ENCODE measurements at regions of chr10 and their contacts with region 1.

Region 1: GRCh38 chr10:17430647-17431355 is 23.6 kb downstream of the ST8SIA6 start:
- DNase-seq: peak; percentile 36
- H3K4me3 Mint-ChIP-seq: no peak overlapping the region
- H3K27ac Mint-ChIP-seq: no peak overlapping the region
- H3K4me1 Mint-ChIP-seq: peaks cover 56% of the 10 kb centered on the region
- H3K27me3 Mint-ChIP-seq: peaks cover 25% of the 10 kb centered on the region

Region 2: DNA sequence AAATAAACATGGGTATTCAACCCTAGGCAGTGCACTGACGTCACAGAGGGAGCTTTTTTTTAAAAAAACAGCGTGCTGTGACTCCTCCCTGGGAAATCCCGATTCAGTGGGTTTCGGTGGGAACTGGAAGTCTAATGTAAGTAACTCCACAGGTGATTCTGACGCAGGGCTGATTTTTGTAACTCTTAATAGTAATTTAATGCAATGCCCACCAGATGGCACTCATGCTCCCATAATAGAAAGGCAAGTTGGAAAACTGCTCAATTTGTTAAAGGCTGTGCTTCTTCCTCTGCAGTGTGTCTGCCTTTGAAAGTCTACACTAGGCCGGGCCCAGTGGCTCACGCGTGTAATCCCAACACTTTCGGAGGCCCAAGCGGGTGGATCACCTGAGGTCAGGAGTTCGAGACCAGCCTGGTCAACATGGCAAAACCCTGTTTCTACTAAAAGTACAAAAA is 602.7 kb before region 1 on chr10:
- intact Hi-C with region 1: loop called (anchors 2 kb)
- DNase-seq: peak; percentile 46
- H3K4me3 Mint-ChIP-seq: no peak overlapping the region
- H3K27ac Mint-ChIP-seq: no peak overlapping the region
- H3K4me1 Mint-ChIP-seq: peaks cover 5% of the 10 kb centered on the region
- H3K27me3 Mint-ChIP-seq: peaks cover 16% of the 10 kb centered on the region

Region 3: DNA sequence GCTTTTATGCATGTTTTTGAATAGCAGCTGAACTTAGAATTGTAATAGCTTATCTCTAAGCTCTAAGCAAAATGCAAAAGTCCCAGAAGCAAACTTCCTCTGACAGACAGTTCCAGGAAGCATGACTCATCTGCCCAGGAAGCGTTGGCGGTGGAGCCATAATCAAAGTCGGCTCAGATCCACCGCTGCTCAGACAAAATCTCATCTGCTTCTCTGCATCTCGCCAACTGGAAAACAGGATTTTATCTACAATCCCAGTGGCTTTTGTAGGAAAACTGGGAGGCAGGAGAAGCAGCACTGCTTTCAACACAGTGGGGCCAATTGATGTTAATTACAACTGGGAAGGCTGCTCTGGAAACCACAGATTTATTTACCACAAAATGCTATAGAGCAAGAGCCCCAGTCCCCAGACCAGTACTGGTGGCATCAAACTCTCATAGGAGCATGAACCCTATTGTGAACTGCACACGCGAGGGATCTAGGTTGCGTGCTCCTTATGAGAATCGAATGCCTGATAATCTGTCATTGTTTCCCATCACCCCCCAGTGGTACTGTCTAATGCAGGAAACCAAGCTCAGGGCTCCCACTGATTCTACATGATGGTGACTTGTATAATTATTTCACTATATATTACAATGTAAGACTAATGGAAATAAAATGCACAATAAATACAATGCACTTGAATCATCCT is 401.1 kb before region 1 on chr10:
- intact Hi-C with region 1: loop called (anchors 5 kb)
- DNase-seq: peak; percentile 66
- H3K4me3 Mint-ChIP-seq: peak overlapping the region; percentile 59
- H3K27ac Mint-ChIP-seq: peak overlapping the region; percentile 86
- H3K4me1 Mint-ChIP-seq: peaks cover 74% of the 10 kb centered on the region
- H3K27me3 Mint-ChIP-seq: peaks cover 17% of the 10 kb centered on the region

Region 4: DNA sequence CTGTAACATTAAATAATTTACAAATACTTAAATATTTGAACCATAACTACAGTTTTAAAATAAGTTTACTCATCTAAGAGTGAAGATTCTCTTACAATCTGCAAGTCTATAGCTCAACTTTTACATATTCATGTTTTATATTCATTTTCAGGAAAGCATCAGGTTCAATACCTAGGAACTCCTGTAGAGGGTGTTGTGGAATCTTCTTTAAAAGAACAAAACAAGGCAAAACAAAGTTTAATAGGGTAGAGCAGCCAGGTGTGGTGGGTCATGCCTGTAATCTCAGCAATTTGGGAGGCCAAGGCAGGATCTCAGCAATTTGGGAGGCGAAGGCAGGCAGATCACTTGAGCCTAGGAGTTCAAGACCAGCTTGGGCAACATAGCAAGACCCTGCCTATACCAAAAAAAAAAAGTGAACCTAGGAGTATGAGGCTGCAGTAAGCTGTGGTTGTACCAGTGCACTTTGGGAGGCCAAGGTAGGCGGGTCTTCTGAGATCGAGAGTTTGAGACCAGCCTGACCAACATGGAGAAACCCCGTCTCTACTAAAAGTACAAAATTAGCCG is 21.5 kb before region 1 on chr10:
- intact Hi-C with region 1: loop called (anchors 1 kb)
- DNase-seq: no peak
- H3K4me3 Mint-ChIP-seq: no peak overlapping the region
- H3K27ac Mint-ChIP-seq: no peak overlapping the region
- H3K4me1 Mint-ChIP-seq: peaks cover 9% of the 10 kb centered on the region
- H3K27me3 Mint-ChIP-seq: peaks cover 26% of the 10 kb centered on the region

Region 5: GRCh38 chr10:17512341-17513001 is 81.7 kb after region 1 on chr10:
- intact Hi-C with region 1: loop called (anchors 5 kb)
- DNase-seq: no peak
- H3K4me3 Mint-ChIP-seq: no peak overlapping the region
- H3K27ac Mint-ChIP-seq: no peak overlapping the region
- H3K4me1 Mint-ChIP-seq: peaks cover 27% of the 10 kb centered on the region
- H3K27me3 Mint-ChIP-seq: peaks cover 1% of the 10 kb centered on the region

Region 6: DNA sequence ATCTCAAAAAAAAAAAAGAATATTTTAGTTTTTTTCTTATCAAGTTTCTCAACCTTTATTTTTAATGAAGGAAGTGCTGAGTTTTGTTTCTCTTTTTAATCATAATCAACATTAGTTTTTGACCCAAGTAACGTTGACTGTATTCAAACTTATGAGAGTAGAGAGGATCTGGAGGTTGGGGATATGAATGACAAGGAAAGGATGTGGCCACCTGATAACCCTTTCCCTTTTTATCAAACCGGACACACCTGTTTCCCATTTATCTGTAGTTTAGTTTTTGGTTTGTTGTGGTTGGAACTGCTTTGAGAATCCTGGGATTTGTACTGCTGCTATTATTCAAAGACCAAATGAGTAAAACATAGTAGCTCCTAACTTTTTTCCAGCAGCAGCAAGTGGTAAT is 147.8 kb after region 1 on chr10:
- intact Hi-C with region 1: no loop called
- DNase-seq: no peak
- H3K4me3 Mint-ChIP-seq: no peak overlapping the region
- H3K27ac Mint-ChIP-seq: no peak overlapping the region
- H3K4me1 Mint-ChIP-seq: peaks cover 2% of the 10 kb centered on the region
- H3K27me3 Mint-ChIP-seq: peaks cover 2% of the 10 kb centered on the region